Colonic mucosa (tissue), 4 donors: ENCODE measurements at regions of chr19 and their contacts with region 1.

Region 1: GRCh38 chr19:19732579-19733501 is at the start of gene ZNF14:
- DNase-seq: peak; percentile 97
- H3K4me3 ChIP-seq: peak within 1 kb of the TSS; percentile 98
- H3K27ac ChIP-seq: peak within 1 kb of the TSS; percentile 74
- H3K4me1 ChIP-seq: no peaks in the 10 kb centered on the region
- H3K27me3 ChIP-seq: no peaks in the 10 kb centered on the region
- CTCF ChIP-seq: no peak
- total RNA-seq, gene ZNF14: 2.6 to 4.8 TPM

Region 2: DNA sequence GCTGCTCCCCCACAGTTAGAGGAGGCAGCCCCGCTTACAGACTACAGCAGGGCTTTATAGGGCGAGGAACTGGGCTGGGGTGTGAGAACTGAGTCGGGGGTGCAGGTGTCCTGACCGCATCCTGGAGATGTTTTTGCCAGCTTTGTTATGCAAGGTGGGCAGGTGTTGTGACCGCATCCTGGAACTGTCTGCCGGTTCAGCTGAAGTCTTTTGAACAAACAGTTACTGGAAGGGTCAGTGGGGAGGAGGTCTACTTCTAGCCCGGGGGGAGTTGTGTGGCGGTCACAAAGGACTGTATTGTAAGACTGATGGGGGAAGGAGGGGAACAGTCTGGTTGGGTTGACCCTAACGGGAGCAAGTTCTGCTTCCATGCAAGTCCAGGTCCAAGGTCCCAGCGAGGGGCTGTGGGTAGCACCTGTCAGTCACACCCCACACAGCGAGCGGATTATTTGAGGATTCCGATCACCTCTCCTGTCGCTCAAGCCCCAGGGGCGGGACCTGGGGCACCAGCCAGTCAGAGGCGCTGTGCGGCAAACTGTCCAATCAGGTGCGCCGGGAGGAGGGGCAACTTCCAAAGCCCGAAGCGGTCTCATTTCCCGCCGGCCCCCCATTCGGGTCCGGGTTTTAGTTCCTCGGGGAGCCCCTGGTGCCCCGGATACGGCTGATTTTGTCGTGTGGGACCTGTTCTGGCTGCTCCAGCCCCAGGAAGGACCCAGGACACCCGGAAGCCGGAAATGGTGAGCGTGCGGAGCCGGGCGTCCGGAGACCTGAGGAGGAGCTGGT is 64.4 kb before region 1 on chr19 and contains the start of gene ZNF101:
- intact Hi-C with region 1: loop called (anchors 5 kb)
- DNase-seq: peak; percentile 96
- H3K4me3 ChIP-seq: peak within 1 kb of the TSS; percentile 79
- H3K27ac ChIP-seq: peak within 1 kb of the TSS; percentile 79
- H3K4me1 ChIP-seq: no peaks in the 10 kb centered on the region
- H3K27me3 ChIP-seq: no peaks in the 10 kb centered on the region
- CTCF ChIP-seq: no peak
- total RNA-seq, gene ZNF101: 13.9 to 15.9 TPM

Region 3: GRCh38 chr19:19776041-19777008 is 43.5 kb after region 1 on chr19:
- intact Hi-C with region 1: loop called (anchors 5 kb)
- DNase-seq: peak; percentile 98
- H3K4me3 ChIP-seq: peak overlapping the region; percentile 51
- H3K27ac ChIP-seq: peak overlapping the region; percentile 56
- H3K4me1 ChIP-seq: peaks cover 9% of the 10 kb centered on the region
- H3K27me3 ChIP-seq: no peaks in the 10 kb centered on the region
- CTCF ChIP-seq: no peak